ENCODE measurements at regions of chr17 and their contacts with region 1.

Region 1: DNA sequence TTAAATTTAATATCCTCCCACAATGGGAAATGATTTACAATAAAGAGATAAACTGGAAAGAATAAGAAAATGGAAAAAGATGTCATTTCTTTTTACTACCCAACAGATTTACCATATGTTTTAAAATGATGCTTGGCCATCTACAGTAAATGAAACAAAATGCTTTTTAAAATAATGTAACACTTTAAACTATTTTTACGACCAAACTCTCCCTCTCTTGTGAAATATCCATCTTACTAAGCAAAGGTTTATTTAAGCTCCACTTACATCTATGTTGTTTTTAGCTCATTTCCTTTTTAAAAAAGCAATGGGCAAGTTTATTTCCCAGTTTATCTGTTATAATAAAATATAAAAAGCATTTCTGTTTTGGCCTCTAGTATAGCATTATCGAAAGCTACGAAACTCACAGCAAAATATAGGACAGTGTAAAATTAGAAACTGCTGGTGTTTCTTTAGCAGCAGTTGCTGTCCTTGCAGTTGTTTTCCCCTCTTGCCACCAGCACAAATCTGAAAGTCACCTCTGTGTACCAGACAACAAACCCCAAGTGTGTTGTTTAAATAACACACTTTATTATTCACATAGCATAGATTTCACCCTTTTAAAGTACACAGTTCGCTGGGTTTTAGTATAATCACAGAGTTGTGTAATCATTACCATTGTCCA is 195.1 kb downstream of the CDRT15L2 start:
- DNase-seq: no peak
- H3K4me3 ChIP-seq: no peak overlapping the region
- H3K4me1 ChIP-seq: no peaks in the 10 kb centered on the region
- H3K27me3 ChIP-seq: no peaks in the 10 kb centered on the region

Region 2: DNA sequence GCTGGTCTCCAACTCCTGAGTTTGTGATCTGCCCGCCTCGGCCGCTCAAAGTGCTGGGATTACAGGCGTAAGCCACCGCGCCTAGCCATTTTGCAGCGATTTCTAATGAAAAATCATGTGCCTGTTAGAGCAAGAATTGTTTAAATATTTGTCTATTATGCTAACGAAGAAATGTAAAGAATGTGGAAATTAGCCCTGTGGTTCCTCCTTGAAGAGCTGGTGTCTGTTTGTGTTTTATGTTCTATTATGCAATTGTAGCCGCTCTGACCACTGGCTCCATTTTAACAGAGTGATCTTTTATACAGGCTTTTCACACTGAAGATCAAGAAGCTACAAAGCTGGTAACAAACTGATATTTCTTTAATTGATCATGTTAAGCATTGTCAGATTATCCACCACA is 50.9 kb after region 1 on chr17:
- in situ Hi-C with region 1: loop called (anchors 5 kb)
- DNase-seq: peak; percentile 50
- H3K4me3 ChIP-seq: no peak overlapping the region
- H3K4me1 ChIP-seq: peaks cover 14% of the 10 kb centered on the region
- H3K27me3 ChIP-seq: no peaks in the 10 kb centered on the region

Region 3: GRCh38 chr17:20896153-20896649 is 121.6 kb after region 1 on chr17:
- in situ Hi-C with region 1: no loop called
- DNase-seq: no peak
- H3K4me3 ChIP-seq: no peak overlapping the region
- H3K4me1 ChIP-seq: no peaks in the 10 kb centered on the region
- H3K27me3 ChIP-seq: no peaks in the 10 kb centered on the region

Region 4: DNA sequence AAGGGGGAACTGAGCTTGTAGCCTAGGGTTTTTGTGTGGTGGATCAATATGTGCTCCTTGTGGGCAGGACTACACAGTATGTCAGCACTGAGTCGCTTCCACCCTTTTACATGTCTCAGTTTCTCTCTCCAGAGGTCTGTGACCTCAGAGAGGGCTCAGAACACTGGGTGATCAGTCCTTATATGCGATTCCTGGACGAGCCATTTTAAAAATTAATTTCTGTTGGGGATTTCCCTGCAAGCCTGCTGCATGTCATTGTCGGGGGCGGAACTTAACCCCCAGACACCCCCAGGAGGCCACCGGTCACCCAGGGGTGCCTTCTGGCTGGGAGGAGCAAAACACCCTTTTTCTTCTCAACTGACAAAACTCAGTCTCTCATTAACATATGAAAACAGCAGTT is 366.3 kb after region 1 on chr17:
- in situ Hi-C with region 1: no loop called
- DNase-seq: no peak
- H3K4me3 ChIP-seq: no peak overlapping the region
- H3K4me1 ChIP-seq: peaks cover 8% of the 10 kb centered on the region
- H3K27me3 ChIP-seq: no peaks in the 10 kb centered on the region

Region 5: DNA sequence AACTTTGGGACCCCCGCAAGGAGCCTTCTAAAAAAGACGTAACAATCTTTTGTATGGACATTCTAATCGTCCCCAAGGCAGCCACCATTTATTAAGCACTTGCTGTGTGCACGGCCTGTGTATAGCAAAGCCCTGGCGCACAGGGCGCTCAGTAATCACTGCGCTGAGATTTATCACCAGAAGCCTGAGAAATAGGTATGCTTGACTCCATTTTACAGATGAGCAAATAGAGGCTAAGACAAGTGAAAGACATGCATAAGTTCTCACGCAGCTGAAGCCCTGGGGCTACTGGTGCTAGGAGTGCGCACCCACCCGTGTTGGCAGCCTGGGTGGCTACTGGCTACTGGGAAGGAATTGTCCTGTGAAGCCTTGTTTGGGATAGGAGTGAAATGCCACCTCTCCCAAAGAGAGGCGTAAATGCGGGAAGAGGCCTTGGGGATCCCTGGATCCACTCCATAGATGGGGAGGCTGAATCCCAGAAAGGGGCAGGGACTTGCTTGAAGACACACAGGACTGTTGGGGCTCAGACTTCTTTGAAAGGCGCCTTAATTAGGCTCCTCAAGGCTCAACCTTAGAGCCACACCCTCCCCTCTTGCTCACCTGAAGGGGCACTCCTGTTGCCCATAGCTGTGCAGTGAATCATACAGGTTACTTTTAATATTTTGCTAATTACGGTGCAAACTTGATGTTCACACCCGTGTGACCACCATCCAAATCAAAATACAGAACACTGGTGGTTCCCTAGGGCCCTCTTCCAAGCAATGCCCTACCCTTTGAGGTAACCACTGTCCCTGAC is 479.2 kb after region 1 on chr17:
- in situ Hi-C with region 1: no loop called
- DNase-seq: no peak
- H3K4me3 ChIP-seq: peak overlapping the region; percentile 34
- H3K4me1 ChIP-seq: peaks cover 5% of the 10 kb centered on the region
- H3K27me3 ChIP-seq: no peaks in the 10 kb centered on the region

Region 6: DNA sequence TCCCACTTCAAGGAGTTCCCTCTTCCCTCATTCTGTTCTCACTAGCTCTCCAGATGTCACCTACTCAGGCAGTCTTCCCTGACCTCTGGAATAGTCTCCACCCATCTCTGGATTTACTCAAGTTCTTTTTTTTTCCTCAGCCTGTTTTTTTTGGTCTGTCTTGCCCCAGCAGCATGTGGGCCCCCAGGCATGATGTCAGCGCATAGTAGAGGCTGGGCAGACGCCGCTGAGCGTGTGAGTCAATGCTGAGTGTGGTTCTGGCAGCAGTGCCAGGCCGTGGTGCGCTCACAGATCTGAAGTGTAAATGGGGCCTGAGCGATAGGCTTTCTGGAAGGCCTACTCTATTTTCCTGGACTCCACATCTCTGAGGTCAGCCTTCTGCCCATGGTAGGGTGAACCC is 915.0 kb after region 1 on chr17:
- in situ Hi-C with region 1: no loop called
- DNase-seq: no peak
- H3K4me3 ChIP-seq: no peak overlapping the region
- H3K4me1 ChIP-seq: no peaks in the 10 kb centered on the region
- H3K27me3 ChIP-seq: no peaks in the 10 kb centered on the region